ENCODE measurements at regions of chr6 and their contacts with region 1.

Region 1: GRCh38 chr6:30483677-30484279 is 5.5 kb upstream of the HLA-E start:
- DNase-seq: no peak
- H3K4me3 ChIP-seq: no peak overlapping the region
- H3K27ac ChIP-seq: no peak overlapping the region
- H3K4me1 ChIP-seq: peaks cover 0 to 2% (median 0%) of the 10 kb centered on the region in 4 experiments; a peak in 3 of 7 replicates
- H3K27me3 ChIP-seq: peaks cover 7 to 23% (median 17%) of the 10 kb centered on the region in 4 experiments; a peak in 6 of 7 replicates
- CTCF ChIP-seq: peak in 2 of 3 experiments; percentile 49 to 63; a peak in 3 of 4 replicates
- EP300 ChIP-seq: no peak
- POLR2A ChIP-seq: no peak
- RAD21 ChIP-seq: peak; percentile 68 to 75

Region 2: DNA sequence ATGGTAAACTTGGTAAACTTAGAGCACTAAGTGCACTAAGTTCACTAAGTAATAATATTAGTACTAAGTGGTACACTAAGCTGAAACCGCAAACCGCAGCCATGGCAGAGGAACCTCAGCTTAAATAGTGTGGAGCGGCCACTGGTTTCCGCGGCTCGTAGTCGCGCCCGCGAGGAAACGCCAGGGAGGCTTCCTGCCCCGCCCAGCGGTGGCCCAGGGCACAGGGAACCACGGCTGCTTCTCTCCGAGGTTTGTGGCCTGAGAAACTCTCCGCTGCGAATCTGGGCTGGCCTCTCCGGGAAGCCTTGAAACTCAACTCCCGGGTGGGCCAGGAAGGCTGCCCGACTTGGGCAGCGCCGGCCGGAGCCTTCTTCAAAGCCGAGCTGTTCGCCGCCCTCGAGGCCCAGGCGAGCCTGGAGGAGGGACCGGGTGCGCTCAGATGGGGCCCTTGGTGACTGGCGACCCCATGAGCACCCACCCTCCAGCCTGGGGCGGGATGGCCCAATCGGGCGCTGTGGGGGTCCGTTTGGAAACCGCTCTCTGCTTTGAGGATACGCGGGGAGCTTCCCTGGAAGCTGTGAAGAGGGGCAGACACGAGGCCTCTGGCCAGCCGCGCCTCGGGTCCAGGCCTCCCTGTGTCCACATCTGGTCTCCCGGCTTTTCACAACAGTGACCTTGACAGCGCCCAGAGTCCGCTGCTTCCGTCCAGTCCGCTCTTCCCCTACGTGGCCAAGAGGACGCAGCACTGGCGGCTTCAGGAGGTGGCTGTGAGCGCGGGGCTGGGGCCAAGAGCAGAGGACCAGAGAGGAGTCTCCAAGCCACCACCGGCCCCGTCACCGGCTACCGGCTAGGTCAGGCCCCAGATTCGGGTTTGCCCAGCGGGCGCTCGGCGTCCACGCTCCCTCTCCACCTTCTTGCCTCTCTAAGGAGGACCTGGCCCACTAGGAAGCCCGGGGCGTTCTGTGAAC is 19.8 kb before region 1 on chr6:
- CTCF ChIA-PET with region 1: interaction called, 16 read pairs
- POLR2A ChIA-PET with region 1: interaction called, 7 read pairs
- DNase-seq: no peak
- H3K4me3 ChIP-seq: no peak overlapping the region
- H3K27ac ChIP-seq: no peak overlapping the region
- H3K4me1 ChIP-seq: no peaks in the 10 kb centered on the region
- H3K27me3 ChIP-seq: peaks cover 33 to 82% (median 72%) of the 10 kb centered on the region in 4 experiments
- CTCF ChIP-seq: no peak
- EP300 ChIP-seq: no peak
- POLR2A ChIP-seq: no peak
- RAD21 ChIP-seq: no peak

Region 3: DNA sequence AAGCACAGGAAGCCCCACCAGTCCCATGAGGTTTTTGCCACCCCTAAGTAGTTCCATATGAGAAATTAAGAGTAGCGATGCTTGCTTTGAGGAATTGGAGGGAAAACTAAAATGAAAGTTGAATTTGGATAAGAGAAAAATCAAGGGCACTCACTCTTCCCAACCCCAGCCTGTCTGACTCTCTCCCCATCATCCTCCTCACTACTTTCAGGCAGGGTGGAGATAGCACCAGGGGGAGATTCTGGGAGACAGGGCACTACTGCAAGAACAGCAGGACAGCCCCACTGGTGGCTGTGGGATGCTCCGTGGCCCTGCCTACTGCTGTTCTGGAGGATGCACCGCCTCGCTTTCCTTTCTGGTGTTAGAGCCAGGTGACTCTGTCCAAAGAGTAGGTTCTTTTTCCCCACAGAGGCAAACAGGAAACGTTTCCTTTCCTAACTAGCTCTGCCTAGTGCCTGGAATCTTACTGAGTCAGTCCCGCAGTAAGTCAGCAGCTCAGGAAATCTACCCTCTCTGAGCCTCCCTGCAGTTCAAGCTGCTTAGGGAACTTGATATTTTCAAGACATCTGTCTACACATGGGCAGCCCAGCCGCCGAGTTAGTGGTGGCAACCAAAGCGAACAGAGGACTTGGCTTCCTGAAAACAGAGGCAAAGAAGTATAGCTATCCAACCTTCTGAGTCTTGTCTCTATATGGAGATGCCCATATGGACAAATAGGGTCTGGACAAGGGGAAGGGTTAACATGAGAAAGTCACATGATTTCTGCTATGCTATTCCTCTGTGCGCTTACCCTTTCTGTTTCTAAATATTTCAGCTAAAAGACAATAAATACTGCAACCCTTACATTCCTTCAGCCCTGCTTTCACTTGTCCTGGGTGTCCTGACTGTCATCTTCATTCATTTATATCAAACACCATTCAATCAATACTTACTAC is 16.9 kb after region 1 on chr6:
- CTCF ChIA-PET with region 1: interaction called, 16 read pairs
- POLR2A ChIA-PET with region 1: no interaction called
- DNase-seq: no peak
- H3K4me3 ChIP-seq: no peak overlapping the region
- H3K27ac ChIP-seq: no peak overlapping the region
- H3K4me1 ChIP-seq: no peaks in the 10 kb centered on the region; a peak in 1 of 7 replicates
- H3K27me3 ChIP-seq: no peaks in the 10 kb centered on the region
- CTCF ChIP-seq: no peak
- EP300 ChIP-seq: no peak
- POLR2A ChIP-seq: no peak
- RAD21 ChIP-seq: no peak

Region 4: GRCh38 chr6:30759575-30760239 is 275.9 kb after region 1 on chr6:
- CTCF ChIA-PET with region 1: no interaction called
- POLR2A ChIA-PET with region 1: no interaction called
- DNase-seq: no peak
- H3K4me3 ChIP-seq: no peak overlapping the region
- H3K27ac ChIP-seq: no peak overlapping the region
- H3K4me1 ChIP-seq: peaks cover 4 to 7% (median 6%) of the 10 kb centered on the region in 4 experiments; a peak in 5 of 7 replicates
- H3K27me3 ChIP-seq: no peaks in the 10 kb centered on the region
- CTCF ChIP-seq: no peak
- EP300 ChIP-seq: no peak
- POLR2A ChIP-seq: no peak
- RAD21 ChIP-seq: no peak

Measured in H1 (cell line).